ENCODE measurements at regions of chr6 and their contacts with region 1.

Region 1: GRCh38 chr6:134822920-134823709 is 126.8 kb downstream of the ALDH8A1 start:
- DNase-seq: peak; percentile 55
- H3K4me3 Mint-ChIP-seq: no peak overlapping the region
- H3K27ac Mint-ChIP-seq: no peak overlapping the region
- H3K4me1 Mint-ChIP-seq: peaks cover 10% of the 10 kb centered on the region
- H3K27me3 Mint-ChIP-seq: no peaks in the 10 kb centered on the region
- CTCF ChIP-seq: peak; percentile 81

Region 2: GRCh38 chr6:134161036-134161435 is 662.1 kb before region 1 on chr6:
- CTCF ChIA-PET with region 1: interaction called, 4 read pairs
- intact Hi-C with region 1: loop called (anchors 5 kb)
- DNase-seq: no peak
- H3K4me3 Mint-ChIP-seq: no peak overlapping the region
- H3K27ac Mint-ChIP-seq: no peak overlapping the region
- H3K4me1 Mint-ChIP-seq: peaks cover 10% of the 10 kb centered on the region
- H3K27me3 Mint-ChIP-seq: no peaks in the 10 kb centered on the region
- CTCF ChIP-seq: no peak

Region 3: DNA sequence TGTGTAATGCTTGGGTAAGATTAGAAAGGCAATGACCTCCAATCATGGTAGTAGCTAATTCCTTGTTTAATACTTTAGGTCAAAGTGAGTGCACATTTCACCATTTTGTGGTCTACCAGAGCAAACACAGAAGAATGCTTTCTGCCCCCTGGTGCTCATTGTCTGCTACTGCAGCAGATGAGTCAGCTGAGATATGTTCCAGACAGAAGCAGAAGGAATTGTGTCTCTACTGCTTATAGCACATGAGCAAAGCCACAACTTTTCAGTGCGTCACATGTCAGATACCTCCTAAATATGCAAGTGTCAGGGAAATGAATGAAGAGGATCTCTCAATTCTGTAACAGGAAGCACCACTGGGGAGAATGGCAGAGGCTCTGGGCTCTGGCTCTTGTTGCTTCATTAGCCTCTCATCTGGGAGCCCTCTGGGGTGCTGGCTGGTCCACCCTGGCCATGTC is 182.1 kb before region 1 on chr6:
- CTCF ChIA-PET with region 1: interaction called, 3 read pairs
- intact Hi-C with region 1: loop called (anchors 5 kb)
- DNase-seq: peak; percentile 75
- H3K4me3 Mint-ChIP-seq: no peak overlapping the region
- H3K27ac Mint-ChIP-seq: no peak overlapping the region
- H3K4me1 Mint-ChIP-seq: peaks cover 27% of the 10 kb centered on the region
- H3K27me3 Mint-ChIP-seq: no peaks in the 10 kb centered on the region
- CTCF ChIP-seq: peak; percentile 85

Region 4: DNA sequence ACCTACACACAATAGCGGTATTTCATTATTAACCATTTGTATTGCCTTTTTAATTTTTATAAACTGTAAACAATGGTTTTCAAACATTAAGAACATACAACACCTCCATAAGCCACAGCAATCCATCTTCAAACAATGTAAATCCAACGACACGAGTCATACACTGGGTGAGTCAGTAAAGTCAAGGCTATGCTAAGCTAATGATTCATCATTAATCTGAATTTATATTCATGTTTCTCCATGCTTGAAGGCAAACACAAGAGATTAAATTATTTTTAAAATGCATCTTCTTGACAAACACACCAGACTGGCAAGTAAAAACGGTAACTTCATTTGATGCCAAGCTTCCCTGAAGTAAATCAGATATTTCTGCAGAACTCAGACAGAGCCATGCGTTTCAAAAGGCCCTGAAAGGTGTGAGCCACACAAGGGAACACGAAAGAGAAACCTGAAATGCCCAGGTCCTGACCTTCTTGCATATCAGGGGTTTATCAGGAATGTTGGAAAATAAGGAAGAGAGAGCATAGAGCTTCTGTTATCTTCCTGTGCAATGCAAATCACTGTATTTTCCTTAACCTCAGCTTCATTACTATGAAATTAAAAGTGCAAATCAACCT is 35.7 kb before region 1 on chr6:
- CTCF ChIA-PET with region 1: no interaction called
- intact Hi-C with region 1: no loop called
- DNase-seq: peak; percentile 9
- H3K4me3 Mint-ChIP-seq: no peak overlapping the region
- H3K27ac Mint-ChIP-seq: no peak overlapping the region
- H3K4me1 Mint-ChIP-seq: peaks cover 16% of the 10 kb centered on the region
- H3K27me3 Mint-ChIP-seq: no peaks in the 10 kb centered on the region
- CTCF ChIP-seq: no peak

Region 5: DNA sequence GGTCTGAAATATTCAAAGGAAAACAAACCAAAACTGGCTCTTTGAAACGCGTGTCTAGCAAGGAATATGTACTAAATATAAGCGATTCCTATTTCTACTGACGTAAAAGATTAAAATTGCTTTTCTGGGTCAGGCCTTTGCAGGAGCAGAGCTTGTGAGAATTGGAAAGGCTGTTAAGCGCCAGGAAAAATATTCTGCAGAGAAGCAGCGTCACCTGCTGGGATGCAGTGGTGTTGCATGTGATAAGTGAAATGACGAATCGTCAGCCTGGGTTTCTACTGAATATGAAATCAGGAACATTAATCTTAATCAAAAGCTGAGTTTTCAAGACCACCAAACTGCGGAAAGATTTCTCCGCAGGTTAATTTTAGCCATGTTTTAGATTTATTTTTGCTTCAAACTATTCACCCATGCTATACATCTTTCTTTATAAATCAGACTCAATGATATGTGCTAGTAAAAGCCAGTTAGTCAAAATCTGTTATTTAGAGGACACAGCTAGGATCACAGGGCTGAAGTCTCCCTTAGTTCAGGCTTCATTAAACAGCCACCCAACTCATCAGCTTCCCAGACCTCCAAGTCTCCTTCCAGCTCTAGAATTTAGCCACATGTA is 59.4 kb after region 1 on chr6:
- CTCF ChIA-PET with region 1: interaction called, 5 read pairs
- intact Hi-C with region 1: loop called (anchors 1 kb)
- DNase-seq: peak; percentile 55
- H3K4me3 Mint-ChIP-seq: no peak overlapping the region
- H3K27ac Mint-ChIP-seq: no peak overlapping the region
- H3K4me1 Mint-ChIP-seq: no peaks in the 10 kb centered on the region
- H3K27me3 Mint-ChIP-seq: no peaks in the 10 kb centered on the region
- CTCF ChIP-seq: peak; percentile 64